ENCODE measurements at regions of chr2 and their contacts with region 1.

Region 1: DNA sequence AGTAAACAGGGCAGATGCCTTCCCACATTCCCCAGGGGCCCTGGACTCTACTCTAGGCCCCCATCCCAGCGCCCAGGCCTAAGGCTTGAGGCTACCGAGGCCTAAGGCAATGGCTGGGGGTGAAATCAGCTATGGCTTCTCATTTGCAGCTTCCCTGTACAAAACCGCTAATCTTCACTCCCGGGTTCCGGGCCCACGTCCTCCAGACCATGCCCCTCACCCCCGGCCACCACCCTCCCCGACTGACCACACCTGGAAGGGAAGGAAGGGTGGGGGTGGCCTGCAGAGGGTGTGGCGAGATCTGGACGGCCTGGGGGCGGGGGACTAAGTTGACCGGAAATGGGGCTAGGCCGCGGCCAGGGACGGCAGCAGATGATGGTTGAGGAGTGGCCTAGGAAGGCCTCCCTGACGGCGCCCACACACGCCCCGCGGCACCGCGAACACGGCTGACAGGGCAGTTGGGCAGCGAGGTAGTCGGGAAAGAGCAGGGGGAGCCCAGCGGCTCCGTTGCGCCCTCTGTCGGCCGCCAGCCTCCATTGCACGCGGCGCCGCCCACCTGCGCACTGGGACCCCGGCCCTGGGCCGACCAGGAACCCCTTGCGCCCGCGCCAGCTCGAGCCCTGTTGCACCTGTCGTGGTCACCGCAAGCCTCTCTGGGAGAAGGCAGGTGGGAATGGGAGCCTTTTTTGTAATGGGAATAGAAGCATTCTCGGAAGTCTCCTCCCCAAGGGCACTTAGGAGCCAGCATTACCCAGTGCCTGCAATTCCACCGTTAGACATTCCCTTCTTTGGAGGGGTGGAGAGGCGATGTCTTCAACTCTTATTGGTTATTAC is 117.1 kb upstream of the STPG4 start:
- DNase-seq: peak; percentile 90
- ATAC-seq: peak; percentile 96
- H3K4me3 ChIP-seq: peak overlapping the region; percentile 46
- H3K27ac ChIP-seq: peak overlapping the region; percentile 51
- H3K4me1 ChIP-seq: peaks cover 16% of the 10 kb centered on the region
- H3K27me3 ChIP-seq: no peaks in the 10 kb centered on the region
- CTCF ChIP-seq: peak; percentile 100

Region 2: DNA sequence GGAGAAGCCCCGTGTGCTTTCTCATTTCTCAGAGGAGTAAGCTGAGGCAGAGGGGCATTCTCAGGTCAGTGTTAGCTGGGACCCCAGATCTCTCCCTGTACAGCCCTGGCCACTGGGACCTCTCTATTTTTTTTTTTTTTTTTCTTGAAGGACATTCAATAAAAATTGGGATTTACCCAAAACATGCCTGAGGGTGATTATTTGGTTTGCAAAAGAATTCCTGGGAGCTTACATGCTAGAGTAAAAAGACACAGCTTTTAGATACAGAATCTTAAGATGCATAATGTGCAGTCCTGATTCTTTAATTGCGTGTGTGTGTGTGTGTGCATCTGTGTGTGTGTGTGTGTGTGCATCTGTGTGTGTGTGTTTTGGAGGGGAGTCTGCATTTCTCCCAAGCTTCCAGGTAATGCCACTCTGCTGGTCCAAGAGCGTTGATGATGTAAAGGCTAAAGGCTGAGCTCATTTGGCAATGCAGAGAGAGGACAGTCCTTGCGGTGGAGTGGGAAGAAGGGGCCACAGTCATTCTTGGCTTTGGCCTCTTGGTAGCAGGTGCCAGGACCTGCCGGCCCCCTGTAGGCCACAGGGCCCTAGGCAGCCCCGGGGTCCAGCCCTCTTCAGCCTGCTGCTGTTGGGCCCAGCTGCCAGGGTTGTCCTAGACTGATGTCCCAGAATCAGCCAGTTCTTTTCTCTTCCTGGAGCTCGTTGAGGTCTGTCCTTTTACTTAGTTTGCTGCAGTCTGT is 282.6 kb before region 1 on chr2:
- intact Hi-C with region 1: loop called (anchors 10 kb)
- DNase-seq: no peak
- ATAC-seq: no peak
- H3K4me3 ChIP-seq: no peak overlapping the region
- H3K27ac ChIP-seq: peak overlapping the region; percentile 30
- H3K4me1 ChIP-seq: peaks cover 38% of the 10 kb centered on the region
- H3K27me3 ChIP-seq: no peaks in the 10 kb centered on the region
- CTCF ChIP-seq: no peak

Measured in upper lobe of right lung (tissue), 1 donor.